ENCODE measurements at regions of chr3 and their contacts with region 1.

Region 1: DNA sequence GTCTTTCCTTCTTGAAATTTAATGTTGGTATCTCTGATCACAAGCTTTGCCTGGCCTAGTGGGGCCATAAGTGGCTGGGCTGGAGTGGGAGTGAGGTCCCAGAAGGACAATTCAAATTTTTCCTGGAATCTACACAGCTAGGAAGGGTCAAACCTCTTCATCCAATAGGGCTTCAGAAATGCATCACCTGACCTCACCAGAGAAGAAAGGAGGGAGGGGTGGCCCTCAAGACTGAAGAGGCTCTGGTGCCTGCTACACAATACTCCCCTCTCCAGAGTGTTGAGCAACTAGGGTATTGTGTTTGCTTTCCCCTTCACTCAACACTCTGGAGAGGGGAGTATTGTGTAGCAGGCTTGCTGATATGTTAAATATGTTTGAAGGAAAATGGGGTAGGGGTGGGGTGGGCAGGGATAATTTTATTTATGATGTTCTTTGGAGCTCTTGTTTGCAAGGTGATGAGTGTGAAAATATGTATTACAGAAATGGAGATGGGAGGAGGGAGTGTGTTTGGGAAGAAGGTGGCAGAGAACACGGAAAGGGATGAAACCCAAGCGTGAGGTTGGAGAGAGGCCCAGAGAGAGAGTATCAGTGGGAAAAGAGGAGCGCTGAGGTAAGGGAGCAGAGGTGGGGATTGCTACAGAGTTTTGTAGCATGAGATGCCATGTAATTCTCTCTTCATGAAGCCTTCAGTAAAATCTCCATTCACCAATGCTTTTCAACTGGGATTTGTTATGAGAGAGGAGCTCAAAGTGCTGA is 5.7 kb upstream of the KLHL24 start:
- DNase-seq: no peak
- ATAC-seq: peak; percentile 37 to 93 (median 50)
- H3K4me3 ChIP-seq: no peak overlapping the region
- H3K27ac ChIP-seq: peak overlapping the region; percentile 68
- H3K4me1 ChIP-seq: peaks cover 38% of the 10 kb centered on the region
- H3K27me3 ChIP-seq: no peaks in the 10 kb centered on the region
- CTCF ChIP-seq: no peak

Region 2: GRCh38 chr3:183489455-183490210 is 140.1 kb before region 1 on chr3:
- intact Hi-C with region 1: loop called in 1 of 2 experiments (anchors 5 kb)
- DNase-seq: no peak
- ATAC-seq: peak; percentile 82 to 91 (median 85)
- H3K4me3 ChIP-seq: peak overlapping the region; percentile 37
- H3K27ac ChIP-seq: peak overlapping the region; percentile 87
- H3K4me1 ChIP-seq: peaks cover 27% of the 10 kb centered on the region
- H3K27me3 ChIP-seq: no peaks in the 10 kb centered on the region
- CTCF ChIP-seq: no peak

Region 3: GRCh38 chr3:183584246-183584913 is 45.3 kb before region 1 on chr3:
- intact Hi-C with region 1: loop called in 1 of 2 experiments (anchors 5 kb)
- DNase-seq: peak; percentile 32 to 69
- ATAC-seq: peak; percentile 79 to 90 (median 86)
- H3K4me3 ChIP-seq: no peak overlapping the region
- H3K27ac ChIP-seq: peak overlapping the region; percentile 66
- H3K4me1 ChIP-seq: peaks cover 49% of the 10 kb centered on the region
- H3K27me3 ChIP-seq: no peaks in the 10 kb centered on the region
- CTCF ChIP-seq: no peak